Common myeloid progenitor, CD34-positive (primary cell): ENCODE measurements at regions of chr3 and their contacts with region 1.

Region 1: GRCh38 chr3:72665701-72666443 is 182.4 kb downstream of the SHQ1 start:
- DNase-seq: peak; percentile 45 to 75 (median 66)
- H3K4me3 ChIP-seq: no peak overlapping the region
- H3K27ac ChIP-seq: no peak overlapping the region
- H3K4me1 ChIP-seq: no peaks in the 10 kb centered on the region
- H3K27me3 ChIP-seq: no peaks in the 10 kb centered on the region

Region 2: GRCh38 chr3:72288955-72289691 is 376.7 kb before region 1 on chr3:
- CTCF ChIA-PET with region 1: no interaction called
- POLR2A ChIA-PET with region 1: no interaction called
- DNase-seq: peak; percentile 93 to 99 (median 96)
- H3K4me3 ChIP-seq: peak overlapping the region in 6 of 7 experiments; percentile 6 to 55 (median 49)
- H3K27ac ChIP-seq: peak overlapping the region; percentile 30 to 73
- H3K4me1 ChIP-seq: peaks cover 4 to 41% (median 38%) of the 10 kb centered on the region in 4 experiments
- H3K27me3 ChIP-seq: no peaks in the 10 kb centered on the region

Region 3: DNA sequence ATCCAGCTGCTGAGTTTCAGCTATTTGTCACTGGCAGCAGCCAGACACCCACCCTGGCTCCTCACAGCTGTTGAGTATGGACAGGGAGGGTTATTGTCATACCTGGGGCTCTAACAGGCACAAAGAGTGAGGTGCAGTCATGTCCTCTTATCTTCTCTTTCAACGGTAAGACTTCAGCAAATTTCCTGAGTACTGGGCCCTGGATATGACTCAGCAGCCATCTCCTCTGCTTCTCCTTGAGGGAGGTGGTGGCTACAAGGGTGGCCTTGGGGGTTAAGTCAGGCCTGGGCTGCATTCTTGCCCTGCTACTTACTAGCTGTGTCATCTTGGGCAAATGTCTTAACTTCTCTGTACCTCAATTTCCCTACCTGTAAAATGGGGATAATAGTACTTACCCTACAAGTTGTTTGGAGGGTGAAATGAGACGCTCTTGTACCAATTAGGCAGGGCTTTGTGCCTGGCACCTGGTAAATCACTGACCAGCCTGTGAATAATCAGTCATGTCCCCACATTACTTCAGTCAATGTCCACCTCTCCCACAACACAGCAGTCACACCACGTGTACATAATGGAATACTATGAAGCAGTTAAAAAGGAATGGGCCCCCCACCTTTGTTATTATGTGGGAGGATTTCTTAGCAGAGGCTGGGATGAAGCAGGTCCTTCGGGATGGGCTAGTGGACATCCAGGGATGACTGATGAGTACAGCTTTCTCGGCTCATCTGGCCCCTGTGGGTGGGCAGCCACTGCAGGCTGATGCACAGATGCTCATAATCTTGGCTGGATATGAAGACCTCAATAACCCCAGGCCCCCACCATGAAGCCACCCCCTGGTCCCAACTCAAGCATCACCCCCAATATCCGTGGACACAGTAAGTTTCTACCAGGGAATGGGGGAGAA is 346.4 kb before region 1 on chr3:
- CTCF ChIA-PET with region 1: no interaction called
- POLR2A ChIA-PET with region 1: no interaction called
- DNase-seq: peak in 2 of 3 donors; percentile 90 to 93
- H3K4me3 ChIP-seq: peak overlapping the region in 2 of 7 experiments; percentile 25 to 26
- H3K27ac ChIP-seq: peak overlapping the region; percentile 33 to 78
- H3K4me1 ChIP-seq: peaks cover 1 to 56% (median 29%) of the 10 kb centered on the region in 4 experiments
- H3K27me3 ChIP-seq: no peaks in the 10 kb centered on the region

Region 4: GRCh38 chr3:72768006-72768441 is 102.2 kb after region 1 on chr3:
- CTCF ChIA-PET with region 1: interaction called, 11 read pairs
- POLR2A ChIA-PET with region 1: no interaction called
- DNase-seq: no peak
- H3K4me3 ChIP-seq: no peak overlapping the region
- H3K27ac ChIP-seq: no peak overlapping the region
- H3K4me1 ChIP-seq: peaks cover 0 to 43% (median 9%) of the 10 kb centered on the region in 4 experiments
- H3K27me3 ChIP-seq: no peaks in the 10 kb centered on the region